Vagina (tissue), 2 donors: ENCODE measurements at regions of chr2 and their contacts with region 1.

Region 1: DNA sequence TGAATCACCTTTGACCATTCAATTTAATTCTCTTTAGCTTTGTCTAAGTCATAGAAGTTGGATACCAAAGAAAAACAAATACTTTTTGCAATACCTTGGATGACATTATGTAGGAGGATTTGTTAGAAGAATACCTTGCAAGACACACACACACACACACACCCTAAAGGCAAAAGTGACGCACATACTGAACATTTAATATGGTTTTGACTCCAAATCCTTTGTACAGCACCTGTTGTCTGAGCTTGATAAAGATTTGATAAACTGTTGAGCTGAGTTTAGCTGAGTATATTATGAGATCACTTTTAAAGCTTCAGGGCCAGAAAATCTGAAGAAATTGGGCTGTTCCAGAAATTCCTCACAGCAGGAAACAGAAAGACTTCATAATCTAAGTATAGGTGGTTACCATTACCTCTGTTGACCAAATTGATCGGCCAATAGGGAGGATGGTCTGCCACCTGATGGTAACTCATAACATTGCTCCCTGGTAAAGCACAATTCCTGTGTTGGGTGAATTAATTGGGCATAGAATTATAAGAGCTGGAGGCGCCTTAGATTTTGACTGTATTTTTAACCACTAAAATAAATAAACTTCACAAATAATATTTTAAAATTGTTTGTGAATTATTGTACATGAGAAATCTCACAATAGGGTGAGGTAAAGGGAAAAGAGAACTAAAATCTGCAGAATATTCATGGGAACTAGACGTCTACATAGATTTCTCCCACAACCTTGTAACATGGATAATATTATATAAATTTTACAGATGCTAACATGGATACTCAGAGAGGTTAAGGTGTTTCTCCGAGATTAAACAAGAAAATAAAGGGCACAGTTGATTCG is 21.9 kb upstream of the RPIA start:
- DNase-seq: no peak
- H3K4me3 ChIP-seq: no peak overlapping the region
- H3K27ac ChIP-seq: no peak overlapping the region
- H3K4me1 ChIP-seq: no peaks in the 10 kb centered on the region
- H3K27me3 ChIP-seq: no peaks in the 10 kb centered on the region
- CTCF ChIP-seq: peak; percentile 16 to 53 (median 37)
- POLR2A ChIP-seq: no peak

Region 2: GRCh38 chr2:88538360-88538917 is 131.2 kb before region 1 on chr2:
- intact Hi-C with region 1: no loop called
- DNase-seq: no peak
- H3K4me3 ChIP-seq: no peak overlapping the region
- H3K27ac ChIP-seq: no peak overlapping the region
- H3K4me1 ChIP-seq: no peaks in the 10 kb centered on the region
- H3K27me3 ChIP-seq: no peaks in the 10 kb centered on the region
- CTCF ChIP-seq: no peak
- POLR2A ChIP-seq: no peak

Region 3: GRCh38 chr2:88590998-88591613 is 78.5 kb before region 1 on chr2:
- intact Hi-C with region 1: loop called (anchors 5 kb)
- DNase-seq: no peak
- H3K4me3 ChIP-seq: no peak overlapping the region
- H3K27ac ChIP-seq: peak overlapping the region; percentile 32
- H3K4me1 ChIP-seq: no peaks in the 10 kb centered on the region
- H3K27me3 ChIP-seq: no peaks in the 10 kb centered on the region
- CTCF ChIP-seq: peak; percentile 55 to 73 (median 65)
- POLR2A ChIP-seq: no peak